Sciatic nerve (tissue), 2 donors: ENCODE measurements at regions of chr12 and their contacts with region 1.

Region 1: GRCh38 chr12:11581179-11581755 is 68.2 kb upstream of the ETV6 start:
- DNase-seq: peak; percentile 83
- ATAC-seq: peak; percentile 27

Region 2: DNA sequence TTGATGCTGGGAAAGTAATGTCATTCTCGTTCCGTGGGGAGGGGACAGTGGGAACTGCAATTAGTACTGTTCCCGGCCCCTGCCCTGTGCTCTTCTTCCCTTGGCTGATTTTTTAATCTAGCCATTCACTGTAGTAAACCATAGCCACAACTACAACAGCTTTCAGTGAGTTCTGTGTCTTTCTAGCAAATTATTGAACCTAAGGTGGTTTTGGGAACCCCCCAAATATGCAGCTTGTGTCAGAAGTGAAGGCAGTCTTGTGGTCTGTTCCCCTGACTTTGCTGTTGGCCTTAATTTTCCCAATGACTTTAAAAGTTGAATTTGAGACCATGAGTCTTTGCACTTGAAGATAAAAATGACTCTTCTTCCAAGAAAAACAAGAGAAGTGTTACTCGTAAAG is 46.1 kb before region 1 on chr12:
- intact Hi-C with region 1: no loop called
- DNase-seq: no peak
- ATAC-seq: no peak

Region 3: GRCh38 chr12:12032851-12033588 is 451.8 kb after region 1 on chr12:
- intact Hi-C with region 1: loop called (anchors 5 kb)
- DNase-seq: peak; percentile 93
- ATAC-seq: peak; percentile 92